ENCODE measurements at regions of chr3 and their contacts with region 1.

Region 1: GRCh38 chr3:181709537-181710279 is 2.0 kb upstream of the SOX2 start:
- DNase-seq: peak; percentile 75 to 81 (median 80)
- ATAC-seq: peak; percentile 80 to 86 (median 82)
- H3K4me3 ChIP-seq: no peak overlapping the region
- H3K27ac ChIP-seq: no peak overlapping the region
- H3K4me1 ChIP-seq: peaks cover 0 to 14% (median 3%) of the 10 kb centered on the region in 4 donors
- H3K27me3 ChIP-seq: peaks cover 17 to 69% of the 10 kb centered on the region in 2 donors
- CTCF ChIP-seq: peak; percentile 63 to 88 (median 84)
- POLR2A ChIP-seq: no peak

Region 2: DNA sequence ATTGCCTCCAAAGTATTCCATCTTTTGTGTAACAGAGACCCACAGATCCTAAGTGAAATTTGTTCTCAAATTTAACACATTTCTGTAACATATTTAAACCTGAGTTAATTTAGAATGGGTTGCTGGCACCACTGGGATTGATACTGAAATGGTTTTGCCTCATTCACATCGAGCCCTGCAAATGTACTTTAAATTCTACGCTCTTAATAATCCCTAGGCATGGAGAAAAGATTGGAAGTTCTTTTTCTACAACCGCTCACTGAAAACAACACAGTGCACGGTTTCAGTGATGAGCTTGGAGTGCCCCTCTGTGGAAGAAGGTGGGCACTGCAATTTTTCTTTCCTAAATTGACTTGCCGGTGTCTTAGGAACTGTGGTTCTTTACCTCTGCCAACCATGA is 973.7 kb after region 1 on chr3:
- intact Hi-C with region 1: loop called (anchors 5 to 10 kb)
- DNase-seq: peak in 2 of 3 donors; percentile 24 to 66
- ATAC-seq: peak; percentile 93 to 98 (median 96)
- H3K4me3 ChIP-seq: peak overlapping the region in 2 of 3 donors; percentile 56 to 67
- H3K27ac ChIP-seq: no peak overlapping the region
- H3K4me1 ChIP-seq: peaks cover 0 to 6% (median 0%) of the 10 kb centered on the region in 4 donors
- H3K27me3 ChIP-seq: no peaks in the 10 kb centered on the region
- CTCF ChIP-seq: peak; percentile 86 to 92 (median 92)
- POLR2A ChIP-seq: no peak

Measured in right lobe of liver (tissue), 6 donors.